ENCODE measurements at regions of chrX and their contacts with region 1.

Region 1: GRCh38 chrX:72018277-72019112 is 107.8 kb downstream of the NHSL2 start:
- DNase-seq: peak; percentile 76
- ATAC-seq: peak; percentile 86
- H3K4me3 Mint-ChIP-seq: peak overlapping the region; percentile 30
- H3K27ac Mint-ChIP-seq: no peak overlapping the region
- H3K4me1 Mint-ChIP-seq: peaks cover 16% of the 10 kb centered on the region
- H3K27me3 Mint-ChIP-seq: peaks cover 17% of the 10 kb centered on the region
- CTCF ChIP-seq: peak; percentile 55

Region 2: GRCh38 chrX:71910986-71911730 is 107.3 kb before region 1 on chrX:
- CTCF ChIA-PET with region 1: interaction called, 23 read pairs
- POLR2A ChIA-PET with region 1: interaction called, 5 read pairs
- DNase-seq: peak; percentile 73
- ATAC-seq: peak; percentile 73
- H3K4me3 Mint-ChIP-seq: peak overlapping the region; percentile 73
- H3K27ac Mint-ChIP-seq: no peak overlapping the region
- H3K4me1 Mint-ChIP-seq: peaks cover 47% of the 10 kb centered on the region
- H3K27me3 Mint-ChIP-seq: no peaks in the 10 kb centered on the region
- CTCF ChIP-seq: no peak

Region 3: DNA sequence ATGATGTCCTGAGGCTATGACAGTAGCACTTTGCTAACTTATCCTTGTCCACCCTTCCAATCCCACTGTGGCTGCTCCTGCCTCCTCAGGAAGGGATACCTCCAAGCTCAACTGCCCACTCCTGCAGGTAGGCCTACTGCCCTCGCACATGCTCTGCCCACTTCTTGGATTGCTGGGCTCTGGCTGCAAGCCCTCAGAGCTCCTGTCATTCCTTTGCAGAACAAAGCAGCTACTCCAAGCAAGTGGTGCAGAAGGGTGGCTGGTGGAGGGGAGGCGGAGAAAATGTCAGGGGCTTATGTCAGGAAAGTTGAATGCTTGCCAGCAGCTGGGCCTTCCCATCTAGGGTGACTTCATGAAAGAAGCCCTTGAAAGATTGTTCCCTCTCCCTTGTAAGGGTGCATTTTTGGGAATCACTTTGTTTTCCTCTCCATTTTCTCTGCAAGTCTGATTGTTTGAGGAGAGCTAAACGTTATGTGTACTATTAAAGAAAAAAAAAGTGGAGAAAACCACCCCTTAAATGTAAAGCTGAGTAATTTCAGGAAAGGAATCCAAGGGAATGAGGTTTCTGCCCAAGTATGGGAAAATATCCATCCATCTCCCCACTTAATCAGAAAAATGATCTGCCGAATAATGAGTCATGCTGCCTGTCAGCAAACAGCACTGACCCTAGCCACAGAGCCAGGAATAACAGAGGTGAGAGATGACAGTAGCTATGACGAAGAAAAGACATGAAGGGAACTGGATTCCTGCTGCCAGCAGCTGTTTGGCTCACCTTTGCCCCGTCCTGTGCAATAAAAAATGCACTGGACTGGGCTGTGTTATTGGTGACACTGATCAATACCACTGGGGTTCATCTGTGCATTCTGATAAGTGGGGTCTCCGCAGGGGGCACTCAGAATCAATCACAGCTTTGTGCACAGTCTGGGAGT is 11.3 kb after region 1 on chrX:
- CTCF ChIA-PET with region 1: interaction called, 11 read pairs
- POLR2A ChIA-PET with region 1: no interaction called
- DNase-seq: no peak
- ATAC-seq: no peak
- H3K4me3 Mint-ChIP-seq: no peak overlapping the region
- H3K27ac Mint-ChIP-seq: no peak overlapping the region
- H3K4me1 Mint-ChIP-seq: peaks cover 9% of the 10 kb centered on the region
- H3K27me3 Mint-ChIP-seq: no peaks in the 10 kb centered on the region
- CTCF ChIP-seq: no peak

Region 4: GRCh38 chrX:72054776-72055489 is 36.4 kb after region 1 on chrX:
- CTCF ChIA-PET with region 1: interaction called, 13 read pairs
- POLR2A ChIA-PET with region 1: no interaction called
- DNase-seq: peak; percentile 57
- ATAC-seq: peak; percentile 46
- H3K4me3 Mint-ChIP-seq: peak overlapping the region; percentile 48
- H3K27ac Mint-ChIP-seq: peak overlapping the region; percentile 87
- H3K4me1 Mint-ChIP-seq: peaks cover 76% of the 10 kb centered on the region
- H3K27me3 Mint-ChIP-seq: no peaks in the 10 kb centered on the region
- CTCF ChIP-seq: no peak

Region 5: GRCh38 chrX:72126539-72127140 is 108.1 kb after region 1 on chrX:
- CTCF ChIA-PET with region 1: interaction called, 31 read pairs
- POLR2A ChIA-PET with region 1: no interaction called
- DNase-seq: peak; percentile 88
- ATAC-seq: peak; percentile 65
- H3K4me3 Mint-ChIP-seq: no peak overlapping the region
- H3K27ac Mint-ChIP-seq: no peak overlapping the region
- H3K4me1 Mint-ChIP-seq: peaks cover 63% of the 10 kb centered on the region
- H3K27me3 Mint-ChIP-seq: peaks cover 33% of the 10 kb centered on the region
- CTCF ChIP-seq: peak; percentile 63

Measured in WTC11 (cell line).